ENCODE measurements at regions of chr5 and their contacts with region 1.

Region 1: GRCh38 chr5:91383027-91383955 is at the start of gene ARRDC3:
- DNase-seq: peak; percentile 96
- H3K4me3 ChIP-seq: peak within 1 kb of the TSS; percentile 95
- H3K27ac ChIP-seq: peak within 1 kb of the TSS; percentile 98
- H3K4me1 ChIP-seq: peaks cover 18% of the 10 kb centered on the region
- CTCF ChIP-seq: no peak
- total RNA-seq, gene ARRDC3: 30.6 TPM in 2 replicates

Region 2: GRCh38 chr5:90474235-90475109 is 908.8 kb before region 1 on chr5 and contains the starts of genes MBLAC2 and POLR3G:
- CTCF ChIA-PET with region 1: no interaction called
- POLR2A ChIA-PET with region 1: interaction called, 3 read pairs
- intact Hi-C with region 1: loop called (anchors 2 kb)
- DNase-seq: peak; percentile 93
- H3K4me3 ChIP-seq: peak within 1 kb of the TSS; percentile 80
- H3K27ac ChIP-seq: peak within 1 kb of the TSS; percentile 59
- H3K4me1 ChIP-seq: peaks cover 41% of the 10 kb centered on the region
- CTCF ChIP-seq: peak; percentile 45
- total RNA-seq, gene MBLAC2: 9.1 and 9.4 TPM in 2 replicates
- total RNA-seq, gene POLR3G: 9.9 and 14.6 TPM in 2 replicates

Region 3: GRCh38 chr5:90932052-90932699 is 451.1 kb before region 1 on chr5:
- CTCF ChIA-PET with region 1: no interaction called
- POLR2A ChIA-PET with region 1: no interaction called
- intact Hi-C with region 1: loop called (anchors 5 kb)
- DNase-seq: peak; percentile 22
- H3K4me3 ChIP-seq: no peak overlapping the region
- H3K27ac ChIP-seq: no peak overlapping the region
- H3K4me1 ChIP-seq: no peaks in the 10 kb centered on the region
- CTCF ChIP-seq: peak; percentile 82

Region 4: GRCh38 chr5:91225848-91226686 is 157.2 kb before region 1 on chr5:
- CTCF ChIA-PET with region 1: interaction called, 9 read pairs
- POLR2A ChIA-PET with region 1: interaction called, 5 read pairs
- intact Hi-C with region 1: loop called (anchors 1 kb)
- DNase-seq: peak; percentile 67
- H3K4me3 ChIP-seq: no peak overlapping the region
- H3K27ac ChIP-seq: no peak overlapping the region
- H3K4me1 ChIP-seq: no peaks in the 10 kb centered on the region
- CTCF ChIP-seq: peak; percentile 81

Region 5: DNA sequence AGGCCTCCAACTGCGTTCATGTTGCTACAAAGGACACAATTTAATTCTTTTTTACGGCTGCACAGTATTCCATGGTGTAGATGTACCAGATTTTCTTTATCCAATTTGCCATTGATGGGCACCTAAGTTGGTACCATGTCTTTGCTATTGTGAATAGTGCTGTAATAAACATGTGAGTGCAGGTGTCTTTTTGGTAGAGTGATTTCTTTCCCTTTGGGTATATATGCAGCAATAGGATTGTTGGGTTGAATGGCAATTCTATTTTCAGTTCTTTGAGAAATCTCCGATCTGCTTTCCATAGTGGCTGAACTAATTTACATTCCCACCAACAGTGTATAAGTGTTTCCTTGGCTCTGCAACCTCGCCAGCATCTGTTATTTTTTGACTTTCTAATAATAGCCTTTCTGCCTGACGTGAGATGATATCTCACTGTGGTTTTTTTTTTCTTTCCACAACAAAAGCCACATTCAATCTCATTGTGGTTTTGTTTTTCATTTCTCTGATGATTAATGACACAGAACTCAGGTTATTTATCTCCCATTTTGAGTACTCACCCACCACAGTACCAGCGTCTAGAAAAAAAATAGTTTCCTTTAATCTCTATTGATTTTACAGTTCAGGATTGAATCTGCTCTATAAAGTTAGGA is 22.1 kb before region 1 on chr5:
- CTCF ChIA-PET with region 1: no interaction called
- POLR2A ChIA-PET with region 1: interaction called, 10 read pairs
- intact Hi-C with region 1: loop called (anchors 2 kb)
- DNase-seq: peak; percentile 30
- H3K4me3 ChIP-seq: no peak overlapping the region
- H3K27ac ChIP-seq: peak overlapping the region; percentile 45
- H3K4me1 ChIP-seq: peaks cover 18% of the 10 kb centered on the region
- CTCF ChIP-seq: no peak

Region 6: DNA sequence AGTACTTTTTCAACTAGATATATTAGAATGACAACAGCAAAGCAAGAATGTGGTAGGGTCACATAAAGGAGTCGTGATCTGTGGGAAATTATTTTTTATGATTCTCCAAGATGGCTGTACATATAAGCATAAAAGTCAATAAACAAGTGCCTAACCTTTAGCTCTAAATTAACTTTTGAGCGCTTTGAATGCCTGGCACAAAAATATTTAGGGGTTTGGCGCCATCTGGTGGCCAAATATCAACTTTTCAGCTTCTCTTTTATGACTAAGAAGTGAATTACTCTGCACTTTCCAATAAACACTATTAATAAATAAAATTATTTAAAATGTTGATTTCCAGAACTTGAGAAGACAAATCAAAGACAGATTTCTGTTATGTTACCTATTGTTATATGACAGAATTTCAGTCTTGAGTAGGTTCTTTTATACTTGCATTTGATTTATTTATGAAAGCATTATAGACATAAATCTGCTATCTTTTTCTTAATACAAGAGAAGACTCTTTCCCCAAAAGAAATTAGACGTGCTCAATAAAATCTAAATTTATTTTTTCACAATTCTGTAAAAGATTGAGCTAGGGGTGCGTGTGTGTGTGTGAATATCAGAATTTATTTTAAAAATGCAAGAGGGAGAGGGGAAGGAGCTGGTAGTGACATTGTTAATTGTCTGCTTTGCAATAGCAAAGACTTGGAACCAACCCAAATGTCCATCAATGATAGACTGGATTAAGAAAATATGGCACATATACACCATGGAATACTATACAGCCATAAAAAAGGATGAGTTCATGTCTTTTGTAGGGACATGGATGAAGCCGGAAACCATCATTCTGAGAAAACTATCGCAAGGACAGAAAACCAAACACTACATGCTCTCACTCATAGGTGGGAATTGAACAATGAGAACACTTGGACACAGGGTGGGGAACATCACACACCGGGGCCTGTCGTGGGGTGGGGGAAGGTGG is 36.6 kb after region 1 on chr5:
- CTCF ChIA-PET with region 1: interaction called, 3 read pairs
- POLR2A ChIA-PET with region 1: interaction called, 8 read pairs
- intact Hi-C with region 1: loop called (anchors 1 kb)
- DNase-seq: peak; percentile 65
- H3K4me3 ChIP-seq: no peak overlapping the region
- H3K27ac ChIP-seq: no peak overlapping the region
- H3K4me1 ChIP-seq: no peaks in the 10 kb centered on the region
- CTCF ChIP-seq: peak; percentile 94